Common myeloid progenitor, CD34-positive (primary cell): ENCODE measurements at regions of chr22 and their contacts with region 1.

Region 1: GRCh38 chr22:35376728-35377472 is 4.0 kb upstream of the HMOX1 start:
- DNase-seq: peak; percentile 97 to 98 (median 97)
- H3K4me3 ChIP-seq: peak overlapping the region in 2 of 7 experiments; percentile 42 to 45
- H3K27ac ChIP-seq: peak overlapping the region in 1 of 2 experiments; percentile 63
- H3K4me1 ChIP-seq: peaks cover 6 to 65% (median 46%) of the 10 kb centered on the region in 4 experiments
- H3K27me3 ChIP-seq: peaks cover 0 to 8% (median 0%) of the 10 kb centered on the region in 5 experiments

Region 2: GRCh38 chr22:35205961-35206360 is 170.9 kb before region 1 on chr22:
- CTCF ChIA-PET with region 1: no interaction called
- POLR2A ChIA-PET with region 1: no interaction called
- DNase-seq: no peak
- H3K4me3 ChIP-seq: no peak overlapping the region
- H3K27ac ChIP-seq: no peak overlapping the region
- H3K4me1 ChIP-seq: no peaks in the 10 kb centered on the region
- H3K27me3 ChIP-seq: peaks cover 0 to 10% (median 2%) of the 10 kb centered on the region in 5 experiments

Region 3: DNA sequence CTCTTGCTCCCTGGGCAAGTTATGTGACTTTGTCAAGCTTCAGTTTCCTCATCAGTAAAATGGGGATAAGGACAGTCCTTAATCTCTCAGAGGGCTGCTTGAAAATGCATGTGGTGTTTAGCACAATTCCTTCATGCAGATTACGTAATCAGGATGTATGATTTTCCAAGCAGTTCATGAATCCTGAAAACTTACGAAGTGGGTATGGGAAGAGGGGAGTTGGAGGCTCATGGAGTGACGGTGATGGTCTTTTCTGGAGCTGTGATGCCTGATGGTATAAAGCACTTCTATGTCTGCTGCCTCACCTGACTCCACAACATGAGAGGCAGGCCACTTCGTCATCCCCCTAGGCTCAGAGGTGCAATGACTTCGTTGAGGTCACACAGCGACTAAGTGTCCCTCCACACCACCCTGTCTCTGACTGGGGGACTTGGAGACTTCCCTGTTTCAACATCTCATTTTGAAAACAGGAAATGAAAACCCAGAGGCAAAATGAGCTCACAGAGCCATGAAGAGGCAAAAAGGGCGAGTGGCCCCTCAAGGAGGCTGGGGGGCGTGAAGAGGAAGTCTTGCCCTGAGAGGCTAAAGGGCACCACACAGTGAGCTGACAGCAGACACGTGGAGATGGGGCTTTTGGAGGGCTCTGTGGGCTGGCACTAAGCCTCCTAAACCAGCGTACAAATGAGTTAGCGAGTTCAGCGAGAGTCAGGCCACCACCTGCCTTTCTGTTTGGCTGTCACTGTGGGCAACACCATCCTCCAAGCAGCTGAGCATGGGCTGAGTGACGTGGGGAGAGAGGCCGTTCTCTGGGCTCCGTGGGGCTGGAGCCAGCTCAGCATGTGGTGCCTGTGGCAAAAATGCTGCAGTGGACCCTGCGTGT is 33.1 kb after region 1 on chr22:
- CTCF ChIA-PET with region 1: interaction called, 19 read pairs
- POLR2A ChIA-PET with region 1: no interaction called
- DNase-seq: peak; percentile 84 to 96 (median 95)
- H3K4me3 ChIP-seq: peak overlapping the region in 2 of 7 experiments; percentile 11 to 33
- H3K27ac ChIP-seq: peak overlapping the region in 1 of 2 experiments; percentile 59
- H3K4me1 ChIP-seq: peaks cover 3 to 32% (median 18%) of the 10 kb centered on the region in 4 experiments
- H3K27me3 ChIP-seq: no peaks in the 10 kb centered on the region

Region 4: GRCh38 chr22:35430897-35431322 is 54.0 kb after region 1 on chr22:
- CTCF ChIA-PET with region 1: no interaction called
- POLR2A ChIA-PET with region 1: no interaction called
- DNase-seq: peak; percentile 50 to 72 (median 64)
- H3K4me3 ChIP-seq: no peak overlapping the region
- H3K27ac ChIP-seq: no peak overlapping the region
- H3K4me1 ChIP-seq: no peaks in the 10 kb centered on the region
- H3K27me3 ChIP-seq: no peaks in the 10 kb centered on the region

Region 5: DNA sequence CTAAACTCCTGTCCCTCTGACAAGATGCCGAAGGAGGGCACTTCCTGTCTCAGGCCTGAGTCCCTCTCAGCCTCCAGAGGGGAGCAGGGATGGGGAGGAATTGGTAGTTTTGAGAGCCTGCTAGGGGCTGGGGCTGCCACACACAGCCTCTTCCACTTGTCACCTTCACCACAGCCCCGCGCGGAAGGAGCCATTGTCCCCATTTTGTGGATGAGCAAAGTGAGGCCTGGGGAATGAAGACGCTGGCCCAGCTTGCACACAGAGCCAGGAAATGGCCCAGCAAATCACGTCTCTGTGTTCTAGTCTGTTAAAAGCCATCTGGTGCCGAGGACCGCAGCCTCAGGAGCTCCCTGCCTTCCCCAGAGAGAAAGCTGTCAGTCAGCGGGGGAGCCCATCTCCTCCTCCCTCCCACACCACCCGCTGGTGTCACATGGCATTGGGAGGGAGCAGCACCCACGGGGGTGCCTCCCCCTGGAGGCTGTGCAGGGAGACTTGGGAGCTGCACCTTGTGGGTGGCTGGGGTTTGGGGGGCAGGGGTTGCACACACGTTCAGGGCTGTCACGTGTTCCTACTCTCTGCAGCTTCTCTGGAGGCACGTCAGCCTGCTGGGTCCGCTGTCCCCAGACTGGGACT is 198.3 kb after region 1 on chr22:
- CTCF ChIA-PET with region 1: no interaction called
- POLR2A ChIA-PET with region 1: no interaction called
- DNase-seq: peak in 1 of 3 donors; percentile 22
- H3K4me3 ChIP-seq: no peak overlapping the region
- H3K27ac ChIP-seq: no peak overlapping the region
- H3K4me1 ChIP-seq: no peaks in the 10 kb centered on the region
- H3K27me3 ChIP-seq: peaks cover 0 to 4% (median 0%) of the 10 kb centered on the region in 5 experiments